ENCODE measurements at regions of chr10 and their contacts with region 1.

Region 1: DNA sequence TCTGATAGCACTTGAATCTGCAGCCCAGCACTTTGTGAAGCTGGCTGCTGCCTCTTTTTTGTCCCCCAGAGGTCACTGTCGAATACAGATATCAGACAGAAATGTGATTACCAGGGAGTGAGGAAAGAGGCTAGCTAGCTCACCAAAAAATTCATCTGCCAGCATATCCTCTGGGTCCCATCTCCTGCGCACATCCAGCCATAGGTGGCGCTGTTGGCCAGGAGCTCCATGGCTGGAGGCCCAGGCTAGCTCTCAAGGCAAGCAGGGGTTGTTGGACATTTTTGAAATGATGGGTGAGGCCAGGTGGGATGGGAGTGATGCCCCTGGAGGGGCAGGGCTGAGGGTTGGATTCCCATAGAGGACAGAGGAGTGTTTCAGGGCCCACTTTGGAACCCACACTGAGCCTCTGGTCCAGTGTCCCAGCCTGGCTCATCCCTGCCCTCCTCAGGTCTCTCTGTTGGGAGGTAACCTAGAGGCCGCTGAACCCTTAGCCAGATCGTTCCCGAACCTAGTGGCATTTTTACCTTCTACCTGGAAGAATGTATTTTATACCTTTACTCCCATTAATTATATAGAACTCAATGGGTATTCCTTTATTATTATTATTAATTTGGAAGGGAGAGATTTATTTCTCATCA is 14.8 kb downstream of the DPCD start:
- DNase-seq: peak; percentile 40
- ATAC-seq: peak; percentile 100
- H3K4me3 ChIP-seq: no peak overlapping the region
- H3K27ac ChIP-seq: no peak overlapping the region
- H3K4me1 ChIP-seq: no peaks in the 10 kb centered on the region
- H3K27me3 ChIP-seq: no peaks in the 10 kb centered on the region
- CTCF ChIP-seq: peak; percentile 93 to 98 (median 96); a peak in 5 of 6 replicates
- EP300 ChIP-seq: no peak
- POLR2A ChIP-seq: no peak
- RAD21 ChIP-seq: peak; percentile 94

Region 2: DNA sequence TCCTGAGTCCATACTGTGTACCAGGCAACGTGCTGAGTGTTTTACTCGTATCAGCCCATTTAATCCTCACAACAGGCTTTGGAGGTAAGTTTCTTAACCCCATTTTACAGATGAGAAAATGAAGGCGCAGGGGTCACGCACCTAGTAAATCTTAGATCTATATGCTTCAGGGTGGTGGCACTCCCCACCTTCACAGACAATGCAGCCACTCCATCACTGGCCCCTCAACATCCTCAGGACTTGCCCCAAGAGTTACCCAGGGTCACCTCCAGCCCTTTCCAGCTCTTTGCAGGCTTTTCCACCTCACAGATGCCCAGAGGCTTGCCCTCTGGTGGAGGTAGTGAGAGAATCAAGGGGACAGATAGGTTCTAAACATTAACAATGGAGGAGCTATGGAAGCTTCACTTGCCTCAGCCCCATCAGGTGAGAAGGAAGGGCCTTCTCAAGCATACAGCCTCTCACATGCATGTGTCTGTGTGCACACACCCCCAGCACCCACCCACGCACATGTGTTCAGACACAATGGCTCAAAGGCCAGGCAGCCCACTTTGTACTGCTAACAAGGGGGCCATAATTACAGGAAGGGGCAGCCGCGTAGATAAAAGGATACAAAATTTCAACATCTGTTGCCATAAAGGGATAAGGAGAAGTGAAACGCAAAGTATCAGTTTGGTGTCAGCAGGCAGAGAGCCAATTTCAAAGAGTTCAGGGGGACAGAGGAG is 14.4 kb after region 1 on chr10:
- CTCF ChIA-PET with region 1: interaction called, 38 read pairs
- POLR2A ChIA-PET with region 1: no interaction called
- RAD21 ChIA-PET with region 1: interaction called, 17 read pairs
- SMC1A ChIA-PET with region 1: interaction called, 3 read pairs
- in situ Hi-C with region 1: no loop called
- intact Hi-C with region 1: no loop called
- DNase-seq: peak; percentile 33
- ATAC-seq: peak; percentile 83
- H3K4me3 ChIP-seq: no peak overlapping the region
- H3K27ac ChIP-seq: peak overlapping the region; percentile 62
- H3K4me1 ChIP-seq: peaks cover 19% of the 10 kb centered on the region
- H3K27me3 ChIP-seq: no peaks in the 10 kb centered on the region
- CTCF ChIP-seq: peak; percentile 0 to 22 (median 16); a peak in 1 of 6 replicates
- EP300 ChIP-seq: peak; percentile 46 to 50; a peak in 2 of 4 replicates
- POLR2A ChIP-seq: 0 out of 2 replicates have a peak, but pooled peaks have one; percentile 6
- RAD21 ChIP-seq: no peak

Region 3: GRCh38 chr10:101708073-101708472 is 105.2 kb after region 1 on chr10:
- CTCF ChIA-PET with region 1: interaction called, 14 read pairs
- POLR2A ChIA-PET with region 1: no interaction called
- RAD21 ChIA-PET with region 1: interaction called, 8 read pairs
- SMC1A ChIA-PET with region 1: interaction called, 3 read pairs
- in situ Hi-C with region 1: no loop called
- intact Hi-C with region 1: no loop called
- DNase-seq: no peak
- ATAC-seq: no peak
- H3K4me3 ChIP-seq: no peak overlapping the region
- H3K27ac ChIP-seq: no peak overlapping the region
- H3K4me1 ChIP-seq: peaks cover 8% of the 10 kb centered on the region
- H3K27me3 ChIP-seq: no peaks in the 10 kb centered on the region
- CTCF ChIP-seq: no peak
- EP300 ChIP-seq: no peak
- POLR2A ChIP-seq: no peak
- RAD21 ChIP-seq: no peak

Region 4: GRCh38 chr10:101773923-101774588 is 171.2 kb after region 1 on chr10:
- CTCF ChIA-PET with region 1: interaction called, 334 read pairs
- POLR2A ChIA-PET with region 1: no interaction called
- RAD21 ChIA-PET with region 1: interaction called, 172 read pairs
- SMC1A ChIA-PET with region 1: interaction called, 139 read pairs
- in situ Hi-C with region 1: no loop called
- intact Hi-C with region 1: no loop called
- DNase-seq: no peak
- ATAC-seq: no peak
- H3K4me3 ChIP-seq: no peak overlapping the region
- H3K27ac ChIP-seq: no peak overlapping the region
- H3K4me1 ChIP-seq: peaks cover 14% of the 10 kb centered on the region
- H3K27me3 ChIP-seq: peaks cover 13 to 20% of the 10 kb centered on the region in 2 experiments; a peak in 3 of 4 replicates
- CTCF ChIP-seq: no peak
- EP300 ChIP-seq: no peak
- POLR2A ChIP-seq: no peak
- RAD21 ChIP-seq: no peak